MCF 10A (cell line): ENCODE measurements at regions of chr14 and their contacts with region 1.

Region 1: GRCh38 chr14:21241218-21241819 is 27.9 kb downstream of the HNRNPC start:
- DNase-seq: peak; percentile 34
- H3K4me3 Mint-ChIP-seq: no peak overlapping the region
- H3K27ac Mint-ChIP-seq: peak overlapping the region; percentile 27
- H3K4me1 Mint-ChIP-seq: peaks cover 14% of the 10 kb centered on the region
- H3K27me3 Mint-ChIP-seq: no peaks in the 10 kb centered on the region
- CTCF ChIP-seq: peak; percentile 36

Region 2: GRCh38 chr14:21257394-21257909 is 16.1 kb after region 1 on chr14:
- CTCF ChIA-PET with region 1: interaction called, 9 read pairs
- POLR2A ChIA-PET with region 1: interaction called, 61 read pairs
- intact Hi-C with region 1: no loop called
- DNase-seq: no peak
- H3K4me3 Mint-ChIP-seq: peak overlapping the region; percentile 18
- H3K27ac Mint-ChIP-seq: no peak overlapping the region
- H3K4me1 Mint-ChIP-seq: peaks cover 47% of the 10 kb centered on the region
- H3K27me3 Mint-ChIP-seq: no peaks in the 10 kb centered on the region
- CTCF ChIP-seq: no peak

Region 3: GRCh38 chr14:21300892-21301291 is 59.6 kb after region 1 on chr14:
- CTCF ChIA-PET with region 1: no interaction called
- POLR2A ChIA-PET with region 1: no interaction called
- intact Hi-C with region 1: no loop called
- DNase-seq: no peak
- H3K4me3 Mint-ChIP-seq: no peak overlapping the region
- H3K27ac Mint-ChIP-seq: no peak overlapping the region
- H3K4me1 Mint-ChIP-seq: no peaks in the 10 kb centered on the region
- H3K27me3 Mint-ChIP-seq: no peaks in the 10 kb centered on the region
- CTCF ChIP-seq: no peak